ENCODE measurements at regions of chr12 and their contacts with region 1.

Region 1: DNA sequence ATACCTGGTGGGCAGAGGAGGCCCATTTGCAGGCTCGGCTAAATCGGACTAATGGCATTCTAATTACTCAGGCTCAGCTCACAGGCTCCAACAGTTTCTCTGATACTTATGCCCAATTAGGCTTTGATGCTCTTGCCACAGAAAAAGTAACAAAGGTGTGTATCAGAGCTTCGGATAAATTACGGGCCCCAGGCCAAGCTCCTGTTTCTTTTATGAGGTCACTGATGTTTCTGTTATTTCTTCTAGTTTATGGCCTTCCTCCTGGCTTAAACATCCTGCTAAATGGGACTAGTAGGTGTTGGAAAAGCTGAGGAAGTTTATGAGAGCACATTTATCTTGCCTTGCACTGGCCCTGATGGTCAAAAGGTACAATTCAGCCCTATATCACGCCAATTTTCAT is 28.8 kb upstream of the C12orf75 start:
- DNase-seq: no peak
- H3K4me3 ChIP-seq: no peak overlapping the region
- H3K27ac ChIP-seq: no peak overlapping the region
- H3K4me1 ChIP-seq: no peaks in the 10 kb centered on the region
- H3K27me3 ChIP-seq: no peaks in the 10 kb centered on the region
- CTCF ChIP-seq: no peak
- POLR2A ChIP-seq: no peak

Region 2: DNA sequence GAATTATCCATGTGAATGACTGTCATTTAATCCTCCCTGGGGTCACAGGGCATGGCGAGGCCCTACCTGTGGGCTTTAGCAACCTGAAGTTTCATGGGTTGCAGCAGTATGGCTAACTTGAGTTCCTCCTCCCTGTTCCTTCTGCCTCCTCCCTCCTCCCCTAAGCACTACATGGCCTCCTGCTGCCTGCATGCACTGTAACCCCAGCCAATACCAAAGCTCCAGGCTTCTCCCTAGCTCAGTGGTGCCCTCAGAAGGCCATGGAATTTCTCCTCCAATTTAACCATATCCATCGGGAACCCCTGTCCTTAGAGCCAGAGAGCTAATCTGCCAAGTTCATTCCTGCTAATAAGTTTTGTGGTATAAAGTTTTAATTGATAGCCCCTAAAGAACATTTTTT is 1555.7 kb before region 1 on chr12:
- intact Hi-C with region 1: loop called (anchors 5 kb)
- DNase-seq: no peak
- H3K4me3 ChIP-seq: no peak overlapping the region
- H3K27ac ChIP-seq: no peak overlapping the region
- H3K4me1 ChIP-seq: peaks cover 6% of the 10 kb centered on the region
- H3K27me3 ChIP-seq: no peaks in the 10 kb centered on the region
- CTCF ChIP-seq: no peak
- POLR2A ChIP-seq: no peak

Region 3: GRCh38 chr12:105654606-105655005 is 352.9 kb after region 1 on chr12:
- intact Hi-C with region 1: no loop called
- DNase-seq: no peak
- H3K4me3 ChIP-seq: no peak overlapping the region
- H3K27ac ChIP-seq: no peak overlapping the region
- H3K4me1 ChIP-seq: peaks cover 19% of the 10 kb centered on the region
- H3K27me3 ChIP-seq: no peaks in the 10 kb centered on the region
- CTCF ChIP-seq: no peak
- POLR2A ChIP-seq: no peak

Measured in vagina (tissue), 2 donors.